ENCODE measurements at regions of chr19 and their contacts with region 1.

Region 1: DNA sequence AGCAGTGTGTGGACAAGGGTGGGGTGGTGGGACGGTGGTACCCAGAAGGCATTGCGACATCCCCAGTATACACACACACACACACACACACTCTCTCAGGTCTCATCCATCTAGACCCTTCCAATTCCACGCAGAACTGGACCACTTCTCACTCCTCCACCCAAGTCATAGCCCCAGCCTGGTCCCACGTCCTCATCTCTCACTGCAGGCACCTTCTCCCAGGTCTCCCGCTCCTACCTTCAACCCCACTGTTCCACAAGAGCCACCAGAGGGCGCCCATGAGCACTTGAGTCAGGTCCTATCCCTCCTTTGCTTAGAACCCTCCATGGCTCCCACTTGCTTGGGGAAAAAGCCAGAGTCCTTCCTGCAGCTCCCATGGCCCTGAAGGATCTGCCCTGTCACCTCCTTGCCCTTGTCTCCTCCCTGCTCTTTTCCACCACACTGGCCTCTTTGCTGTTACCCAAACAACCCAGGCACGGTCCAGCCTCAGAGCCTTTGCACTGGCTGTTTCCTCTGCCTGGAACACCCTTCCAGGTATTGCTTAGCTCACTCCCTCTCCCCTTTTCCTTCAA is 62.6 kb downstream of the IER2 start:
- DNase-seq: peak; percentile 59
- H3K4me3 Mint-ChIP-seq: no peak overlapping the region
- H3K27ac Mint-ChIP-seq: peak overlapping the region; percentile 41
- H3K4me1 Mint-ChIP-seq: peaks cover 24% of the 10 kb centered on the region
- H3K27me3 Mint-ChIP-seq: peaks cover 4% of the 10 kb centered on the region

Region 2: GRCh38 chr19:13195678-13196077 is 17.2 kb before region 1 on chr19:
- intact Hi-C with region 1: loop called (anchors 2 kb)
- DNase-seq: peak; percentile 32
- H3K4me3 Mint-ChIP-seq: no peak overlapping the region
- H3K27ac Mint-ChIP-seq: no peak overlapping the region
- H3K4me1 Mint-ChIP-seq: peaks cover 15% of the 10 kb centered on the region
- H3K27me3 Mint-ChIP-seq: no peaks in the 10 kb centered on the region

Region 3: DNA sequence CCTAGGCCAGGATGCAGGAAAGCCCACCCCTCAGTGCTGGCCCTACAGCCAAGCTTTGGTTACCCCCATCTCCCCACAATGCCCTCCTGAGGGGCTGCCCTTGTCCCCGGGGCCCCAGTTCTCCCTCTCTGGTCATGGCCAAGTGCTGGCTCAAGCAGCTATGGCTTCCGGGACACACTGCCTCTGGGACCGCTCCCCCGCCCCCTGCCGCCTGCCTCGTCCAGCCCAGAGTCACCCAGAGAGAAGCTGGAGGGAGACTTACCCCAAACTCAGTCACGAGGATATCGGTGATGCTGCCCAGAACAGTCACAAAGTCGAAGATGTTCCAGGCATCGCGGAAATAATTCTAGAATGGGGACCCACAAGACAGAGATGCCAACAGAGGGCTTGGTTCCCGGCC is 32.1 kb after region 1 on chr19:
- intact Hi-C with region 1: loop called (anchors 5 kb)
- DNase-seq: no peak
- H3K4me3 Mint-ChIP-seq: no peak overlapping the region
- H3K27ac Mint-ChIP-seq: no peak overlapping the region
- H3K4me1 Mint-ChIP-seq: peaks cover 10% of the 10 kb centered on the region
- H3K27me3 Mint-ChIP-seq: peaks cover 2% of the 10 kb centered on the region

Region 4: DNA sequence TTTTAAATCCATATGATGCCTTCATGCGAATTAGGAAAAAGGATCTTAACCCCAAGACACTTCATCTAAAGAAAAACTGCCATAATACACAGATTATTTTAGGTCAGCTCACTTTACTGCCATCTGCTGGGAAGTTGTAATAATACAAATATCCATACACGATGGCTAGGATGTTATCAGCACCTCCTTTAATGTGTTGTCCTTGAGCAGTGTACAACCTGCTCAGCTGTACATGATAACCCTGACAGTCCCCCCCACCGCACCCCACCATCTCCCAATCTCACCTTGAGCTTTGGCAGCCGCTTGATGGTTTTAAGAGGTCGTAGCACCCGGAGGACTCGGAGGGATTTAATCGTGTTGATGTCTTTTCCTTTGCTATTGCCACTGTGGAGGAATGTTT is 49.6 kb after region 1 on chr19:
- intact Hi-C with region 1: loop called (anchors 1 kb)
- DNase-seq: peak; percentile 8
- H3K4me3 Mint-ChIP-seq: no peak overlapping the region
- H3K27ac Mint-ChIP-seq: no peak overlapping the region
- H3K4me1 Mint-ChIP-seq: peaks cover 17% of the 10 kb centered on the region
- H3K27me3 Mint-ChIP-seq: peaks cover 17% of the 10 kb centered on the region

Region 5: GRCh38 chr19:13277104-13277809 is 64.4 kb after region 1 on chr19:
- intact Hi-C with region 1: loop called (anchors 1 kb)
- DNase-seq: peak; percentile 72
- H3K4me3 Mint-ChIP-seq: no peak overlapping the region
- H3K27ac Mint-ChIP-seq: peak overlapping the region; percentile 71
- H3K4me1 Mint-ChIP-seq: peaks cover 16% of the 10 kb centered on the region
- H3K27me3 Mint-ChIP-seq: peaks cover 4% of the 10 kb centered on the region

Region 6: DNA sequence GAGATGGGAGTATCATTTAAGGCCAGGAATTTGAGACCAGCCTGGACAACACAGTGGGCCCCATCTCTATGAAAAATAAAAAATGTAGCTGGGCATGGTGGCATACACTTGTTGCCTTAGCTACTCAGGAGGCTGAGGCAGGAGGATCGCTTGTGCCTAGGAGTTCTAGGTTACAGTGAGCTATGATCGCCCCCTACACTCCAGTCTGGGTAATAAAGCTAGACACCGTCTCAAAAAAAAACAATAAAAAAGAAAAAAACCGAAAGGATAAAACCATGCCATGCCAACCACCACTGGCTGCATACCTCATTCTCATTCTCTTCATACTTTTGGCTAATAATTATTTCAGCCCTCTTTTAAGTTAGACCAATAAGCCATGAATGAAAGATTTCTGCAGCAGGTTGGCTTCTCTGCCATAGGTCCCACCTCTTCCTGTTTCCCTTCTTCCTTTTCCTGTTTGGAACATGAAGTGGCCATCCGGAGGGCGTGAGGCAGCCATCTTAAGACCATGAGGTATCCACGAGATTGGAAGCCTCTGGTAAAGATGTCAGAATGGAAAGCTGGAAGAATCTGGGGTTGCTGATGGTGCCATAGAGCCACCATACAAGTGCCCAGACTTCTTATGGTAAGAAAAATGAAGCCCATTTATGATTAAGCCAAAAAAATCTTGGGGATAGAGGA is 122.1 kb after region 1 on chr19:
- intact Hi-C with region 1: no loop called
- DNase-seq: no peak
- H3K4me3 Mint-ChIP-seq: no peak overlapping the region
- H3K27ac Mint-ChIP-seq: no peak overlapping the region
- H3K4me1 Mint-ChIP-seq: no peaks in the 10 kb centered on the region
- H3K27me3 Mint-ChIP-seq: no peaks in the 10 kb centered on the region